ENCODE measurements at regions of chr20 and their contacts with region 1.

Region 1: GRCh38 chr20:50528804-50529351 is 18.7 kb downstream of the PTPN1 start:
- DNase-seq: peak; percentile 24
- H3K4me3 Mint-ChIP-seq: no peak overlapping the region
- H3K27ac Mint-ChIP-seq: no peak overlapping the region
- H3K4me1 Mint-ChIP-seq: peaks cover 31% of the 10 kb centered on the region
- H3K27me3 Mint-ChIP-seq: no peaks in the 10 kb centered on the region

Region 2: DNA sequence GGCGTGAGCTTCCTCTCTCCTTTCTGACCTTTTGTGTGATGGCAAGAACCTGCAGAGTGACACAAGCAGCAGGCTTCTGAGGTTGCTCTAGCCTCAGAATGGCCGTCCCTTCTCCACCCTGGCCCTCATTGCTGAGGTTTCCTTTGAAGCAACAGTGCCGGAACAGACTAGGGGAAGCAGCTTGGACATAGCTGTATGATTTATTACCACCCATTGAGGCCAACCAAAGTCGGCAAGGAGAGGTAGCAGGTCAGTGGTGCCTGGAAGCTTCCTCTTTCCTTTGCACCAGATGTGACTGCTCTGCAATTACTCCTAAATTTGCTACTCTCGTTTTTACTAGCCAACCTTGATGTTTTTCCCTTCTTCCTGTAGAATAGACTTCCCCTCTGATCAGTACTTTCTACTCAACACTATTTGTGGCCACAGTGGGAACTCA is 12.7 kb after region 1 on chr20:
- CTCF ChIA-PET with region 1: interaction called, 5 read pairs
- intact Hi-C with region 1: loop called (anchors 1 kb)
- DNase-seq: no peak
- H3K4me3 Mint-ChIP-seq: no peak overlapping the region
- H3K27ac Mint-ChIP-seq: peak overlapping the region; percentile 61
- H3K4me1 Mint-ChIP-seq: peaks cover 82% of the 10 kb centered on the region
- H3K27me3 Mint-ChIP-seq: no peaks in the 10 kb centered on the region

Region 3: DNA sequence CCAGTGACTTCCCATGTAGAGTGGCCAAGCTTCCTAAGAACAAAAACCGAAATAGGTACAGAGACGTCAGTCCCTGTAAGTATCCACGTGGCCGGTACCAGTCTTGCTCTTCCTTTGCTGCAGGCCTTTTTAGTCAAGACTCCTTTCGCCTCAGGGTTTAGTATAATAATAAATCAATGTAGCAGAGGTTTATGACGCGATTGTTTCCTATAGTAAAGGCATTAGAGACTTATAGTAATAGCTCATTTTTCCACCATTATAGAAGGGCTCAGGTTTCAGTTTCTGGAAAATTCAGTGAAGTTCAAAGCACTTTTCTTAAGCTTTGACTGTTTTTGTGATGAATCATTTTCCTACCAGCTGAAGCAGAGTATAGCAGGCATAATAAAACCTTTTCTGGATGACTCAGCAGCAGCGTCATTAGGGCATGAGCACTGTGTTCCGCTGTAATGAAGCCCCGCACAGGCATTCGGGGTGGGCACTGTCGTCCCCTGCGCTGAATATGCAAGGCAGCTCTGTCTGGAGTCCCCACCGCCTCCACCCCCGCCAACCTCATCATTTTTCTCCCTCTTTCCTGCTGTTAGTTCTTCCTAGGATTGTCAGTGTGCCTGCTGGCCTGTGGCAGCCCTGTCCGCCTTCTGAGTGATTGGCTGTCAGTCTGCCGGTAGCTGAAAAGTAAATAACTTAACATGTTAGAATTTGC is 32.7 kb after region 1 on chr20:
- CTCF ChIA-PET with region 1: interaction called, 4 read pairs
- intact Hi-C with region 1: loop called (anchors 1 kb)
- DNase-seq: peak; percentile 85
- H3K4me3 Mint-ChIP-seq: peak overlapping the region; percentile 89
- H3K27ac Mint-ChIP-seq: peak overlapping the region; percentile 99
- H3K4me1 Mint-ChIP-seq: peaks cover 87% of the 10 kb centered on the region
- H3K27me3 Mint-ChIP-seq: no peaks in the 10 kb centered on the region